ENCODE measurements at regions of chr12 and their contacts with region 1.

Region 1: DNA sequence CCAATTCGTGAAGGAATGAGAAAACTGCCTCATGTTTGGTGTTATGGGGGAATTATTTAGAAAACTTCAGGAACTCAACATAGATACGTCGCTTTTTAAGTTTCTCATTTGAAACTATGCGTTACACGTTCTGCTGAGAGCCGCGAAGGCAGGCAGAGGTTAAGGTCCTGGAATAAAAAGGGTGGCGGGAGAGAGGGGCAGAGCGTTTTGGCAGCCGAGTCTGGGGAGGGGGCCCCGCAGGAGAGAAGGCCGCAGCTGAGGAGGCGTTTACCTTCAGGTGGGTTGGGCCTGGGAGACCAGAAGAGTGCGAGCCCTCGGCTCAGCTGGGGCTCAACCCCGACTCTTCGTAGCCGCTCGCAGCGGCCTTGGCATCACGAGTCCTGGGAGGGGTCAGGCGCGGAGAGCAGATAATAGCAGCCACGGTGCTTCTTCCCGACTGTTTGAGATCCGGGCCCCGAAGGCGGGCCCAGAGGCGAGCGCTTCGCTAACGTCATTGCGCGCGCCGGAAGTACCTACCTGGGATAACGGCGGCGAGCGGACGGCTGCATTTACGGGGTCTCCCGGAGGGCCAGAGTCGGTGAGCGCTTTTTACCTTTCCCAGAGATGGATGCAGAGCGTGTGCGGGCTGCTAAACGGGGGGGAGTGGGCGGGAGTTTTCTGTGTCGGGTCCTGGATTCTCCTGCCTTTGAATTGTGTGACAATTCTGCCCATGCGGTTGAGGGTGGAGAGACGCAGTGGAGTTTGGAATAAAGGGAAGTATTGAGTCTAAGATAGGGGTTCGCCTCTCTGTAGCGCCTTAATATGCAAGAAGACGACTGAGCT is at the starts of genes PPHLN1 and ZCRB1:
- DNase-seq: peak; percentile 80 to 92 (median 85)
- ATAC-seq: peak; percentile 94
- H3K4me3 ChIP-seq: peak within 1 kb of the TSS; percentile 78
- H3K27ac ChIP-seq: peak within 1 kb of the TSS; percentile 84
- H3K4me1 ChIP-seq: peaks cover 9 to 10% of the 10 kb centered on the region in 2 experiments
- H3K27me3 ChIP-seq: no peaks in the 10 kb centered on the region
- CTCF ChIP-seq: no peak
- EP300 ChIP-seq: no peak
- POLR2A ChIP-seq: peak; percentile 90
- RAD21 ChIP-seq: no peak
- polyA plus RNA-seq, gene PPHLN1: 105 to 112 TPM
- polyA plus RNA-seq, gene ZCRB1: 60.1 to 65.9 TPM

Region 2: GRCh38 chr12:42039176-42039575 is 286.7 kb before region 1 on chr12:
- CTCF ChIA-PET with region 1: no interaction called
- POLR2A ChIA-PET with region 1: no interaction called
- in situ Hi-C with region 1: no loop called
- intact Hi-C with region 1: loop called (anchors 5 kb)
- DNase-seq: peak in 2 of 4 experiments; percentile 17 to 20
- ATAC-seq: peak; percentile 74
- H3K4me3 ChIP-seq: no peak overlapping the region
- H3K27ac ChIP-seq: no peak overlapping the region
- H3K4me1 ChIP-seq: no peaks in the 10 kb centered on the region
- H3K27me3 ChIP-seq: no peaks in the 10 kb centered on the region
- CTCF ChIP-seq: peak in 2 of 3 experiments; percentile 6 to 29; a peak in 1 of 6 replicates
- EP300 ChIP-seq: no peak
- POLR2A ChIP-seq: no peak
- RAD21 ChIP-seq: peak in 1 of 2 experiments; percentile 29; a peak in 1 of 4 replicates

Region 3: DNA sequence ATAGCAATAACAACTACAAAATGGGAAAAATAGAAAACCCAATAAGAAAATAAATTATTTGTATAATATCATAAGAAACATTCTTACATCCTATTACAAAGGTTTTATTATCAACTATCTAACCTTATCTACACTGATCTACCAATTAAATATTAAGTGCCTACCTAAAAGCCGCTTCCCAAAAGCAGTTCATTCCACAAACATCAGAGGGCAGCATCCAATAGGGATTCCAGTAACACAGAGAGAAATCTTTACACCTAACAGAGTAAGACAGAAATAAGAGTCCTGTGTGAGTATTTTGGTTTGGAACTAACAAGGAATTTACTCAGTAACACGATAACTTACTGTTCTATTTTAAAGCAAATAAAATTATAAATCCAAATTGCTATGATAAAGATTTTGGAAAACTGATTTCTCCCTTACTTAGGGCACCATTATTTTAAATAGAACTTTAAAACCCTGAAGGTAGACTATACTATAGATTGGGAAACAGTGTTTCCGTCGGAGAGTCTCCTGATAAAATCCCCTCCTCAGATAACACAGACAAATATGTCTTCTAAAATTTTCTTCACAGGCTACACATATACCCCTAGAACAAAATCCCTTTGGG is 196.2 kb before region 1 on chr12:
- CTCF ChIA-PET with region 1: interaction called, 27 read pairs
- POLR2A ChIA-PET with region 1: no interaction called
- in situ Hi-C with region 1: loop called (anchors 5 kb)
- intact Hi-C with region 1: no loop called
- DNase-seq: peak in 2 of 4 experiments; percentile 26 to 61
- ATAC-seq: peak; percentile 71
- H3K4me3 ChIP-seq: no peak overlapping the region
- H3K27ac ChIP-seq: no peak overlapping the region
- H3K4me1 ChIP-seq: peaks cover 0 to 2% of the 10 kb centered on the region in 2 experiments; a peak in 3 of 5 replicates
- H3K27me3 ChIP-seq: no peaks in the 10 kb centered on the region
- CTCF ChIP-seq: peak; percentile 61 to 79 (median 71); a peak in 5 of 6 replicates
- EP300 ChIP-seq: no peak
- POLR2A ChIP-seq: no peak
- RAD21 ChIP-seq: peak; percentile 89 to 93

Region 4: GRCh38 chr12:42144408-42145196 is 181.3 kb before region 1 on chr12 and contains the start of gene GXYLT1:
- CTCF ChIA-PET with region 1: no interaction called
- POLR2A ChIA-PET with region 1: no interaction called
- in situ Hi-C with region 1: no loop called
- intact Hi-C with region 1: loop called (anchors 2 kb)
- DNase-seq: peak; percentile 92 to 95 (median 94)
- ATAC-seq: peak; percentile 96
- H3K4me3 ChIP-seq: peak within 1 kb of the TSS; percentile 67
- H3K27ac ChIP-seq: peak within 1 kb of the TSS; percentile 74
- H3K4me1 ChIP-seq: peaks cover 13 to 23% of the 10 kb centered on the region in 2 experiments; a peak in 4 of 5 replicates
- H3K27me3 ChIP-seq: no peaks in the 10 kb centered on the region
- CTCF ChIP-seq: 0 out of 6 replicates have a peak, but pooled peaks of 1 of the 3 experiments have one; percentile 1
- EP300 ChIP-seq: no peak
- POLR2A ChIP-seq: peak; percentile 91
- RAD21 ChIP-seq: no peak
- polyA plus RNA-seq, gene GXYLT1: 1.4 to 1.7 TPM

Region 5: DNA sequence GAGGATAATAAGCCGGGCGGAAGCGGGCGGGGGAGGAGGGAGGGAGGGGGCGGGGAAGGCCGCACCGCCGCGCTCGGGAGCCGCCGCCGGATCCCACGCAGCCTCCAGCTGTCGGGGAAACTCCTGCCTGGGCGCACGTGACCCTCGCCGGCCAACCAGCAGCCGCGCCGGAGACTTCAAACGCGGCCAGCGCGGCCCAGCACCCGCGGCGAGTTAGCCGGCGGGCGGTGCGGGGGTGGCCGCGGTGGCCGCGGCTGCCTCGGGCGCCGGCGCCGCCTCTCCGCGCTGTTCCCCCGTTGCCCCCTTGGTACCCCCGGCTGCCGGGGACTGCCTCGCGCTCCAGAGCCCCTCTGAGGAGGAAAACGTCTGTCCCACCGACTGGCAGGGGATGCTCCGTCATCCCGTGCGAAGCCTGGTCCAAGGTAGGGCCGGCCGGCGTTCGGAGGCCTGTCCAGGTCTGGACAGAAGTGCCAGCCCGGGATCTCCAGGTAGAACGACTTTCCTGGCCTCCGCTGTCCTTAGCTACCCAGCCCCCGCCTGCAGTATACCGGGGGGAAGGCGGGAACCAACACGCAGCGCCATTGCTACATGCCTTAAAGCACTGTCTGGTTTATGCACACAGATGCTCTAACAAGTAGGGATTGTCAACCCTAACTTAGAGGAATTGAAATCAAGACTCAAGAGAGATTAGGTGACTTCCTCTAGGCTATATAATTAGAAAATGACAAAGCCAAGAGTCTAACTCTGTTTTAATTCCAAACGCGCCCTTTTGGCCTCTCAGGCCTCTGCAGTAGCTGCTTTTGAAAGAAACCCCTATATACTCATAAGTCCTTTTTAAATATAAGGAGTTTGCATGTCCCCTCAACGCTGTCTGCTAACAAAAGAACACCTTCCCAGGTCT is 87.4 kb before region 1 on chr12 and contains the start of gene YAF2:
- CTCF ChIA-PET with region 1: no interaction called
- POLR2A ChIA-PET with region 1: no interaction called
- in situ Hi-C with region 1: no loop called
- intact Hi-C with region 1: loop called (anchors 2 kb)
- DNase-seq: peak; percentile 93 to 94 (median 94)
- ATAC-seq: peak; percentile 92
- H3K4me3 ChIP-seq: peak within 1 kb of the TSS; percentile 72
- H3K27ac ChIP-seq: peak within 1 kb of the TSS; percentile 93
- H3K4me1 ChIP-seq: peaks cover 5 to 14% of the 10 kb centered on the region in 2 experiments; a peak in 3 of 5 replicates
- H3K27me3 ChIP-seq: no peaks in the 10 kb centered on the region
- CTCF ChIP-seq: no peak
- EP300 ChIP-seq: no peak
- POLR2A ChIP-seq: peak; percentile 62
- RAD21 ChIP-seq: no peak
- polyA plus RNA-seq, gene YAF2: 14.9 to 19.6 TPM

Region 6: GRCh38 chr12:42539696-42540095 is 213.8 kb after region 1 on chr12:
- CTCF ChIA-PET with region 1: no interaction called
- POLR2A ChIA-PET with region 1: no interaction called
- in situ Hi-C with region 1: no loop called
- intact Hi-C with region 1: no loop called
- DNase-seq: no peak
- ATAC-seq: no peak
- H3K4me3 ChIP-seq: no peak overlapping the region
- H3K27ac ChIP-seq: no peak overlapping the region
- H3K4me1 ChIP-seq: no peaks in the 10 kb centered on the region
- H3K27me3 ChIP-seq: no peaks in the 10 kb centered on the region
- CTCF ChIP-seq: no peak
- EP300 ChIP-seq: no peak
- POLR2A ChIP-seq: no peak
- RAD21 ChIP-seq: no peak

Measured in K562 (cell line).